Activated CD4-positive, alpha-beta T cell treated with anti-CD3 and anti-CD28 coated beads for 36 hours (primary cell): ENCODE measurements at regions of chr4 and their contacts with region 1.

Region 1: DNA sequence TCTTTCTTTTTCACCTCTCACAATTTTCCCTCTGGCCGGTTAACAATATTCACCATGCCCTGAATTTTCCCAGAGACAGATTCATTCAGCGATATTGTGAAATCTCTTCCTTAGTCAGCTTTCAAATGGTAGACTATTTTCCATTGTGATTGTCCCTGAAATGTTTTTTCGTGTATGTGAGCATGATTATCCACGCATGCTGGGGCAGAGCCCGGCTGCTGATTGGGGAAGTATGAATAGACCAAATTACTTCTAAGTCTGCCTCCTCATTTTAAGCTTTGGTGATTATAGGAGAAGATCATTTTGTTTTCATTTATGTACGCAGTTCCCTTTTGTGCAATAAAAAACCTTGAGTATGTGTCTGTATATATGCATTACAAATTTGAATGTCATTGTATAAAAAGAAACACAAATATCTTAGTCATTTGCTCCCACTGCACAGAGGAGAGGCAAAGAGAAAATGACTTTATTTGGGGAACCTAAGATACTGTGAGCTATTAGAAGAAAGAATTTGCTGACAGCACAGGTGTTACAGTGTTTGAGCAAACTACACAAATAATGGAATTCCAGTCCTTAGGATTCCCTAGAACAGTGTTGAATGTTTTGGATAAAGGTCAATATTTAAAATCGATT is 11.3 kb downstream of the DTHD1 start:
- DNase-seq: no peak
- ATAC-seq: no peak
- H3K4me3 Mint-ChIP-seq: no peak overlapping the region
- H3K27ac Mint-ChIP-seq: no peak overlapping the region
- H3K4me1 Mint-ChIP-seq: peaks cover 8% of the 10 kb centered on the region
- H3K27me3 Mint-ChIP-seq: no peaks in the 10 kb centered on the region

Region 2: GRCh38 chr4:36310793-36311192 is 18.1 kb after region 1 on chr4:
- CTCF ChIA-PET with region 1: interaction called, 3 read pairs
- POLR2A ChIA-PET with region 1: no interaction called
- intact Hi-C with region 1: loop called in 1 of 2 experiments (anchors 2 kb)
- DNase-seq: no peak
- ATAC-seq: peak; percentile 58
- H3K4me3 Mint-ChIP-seq: no peak overlapping the region
- H3K27ac Mint-ChIP-seq: peak overlapping the region; percentile 61
- H3K4me1 Mint-ChIP-seq: peaks cover 19% of the 10 kb centered on the region
- H3K27me3 Mint-ChIP-seq: peaks cover 6% of the 10 kb centered on the region